Endothelial cell of umbilical vein (primary cell): ENCODE measurements at regions of chr10 and their contacts with region 1.

Region 1: DNA sequence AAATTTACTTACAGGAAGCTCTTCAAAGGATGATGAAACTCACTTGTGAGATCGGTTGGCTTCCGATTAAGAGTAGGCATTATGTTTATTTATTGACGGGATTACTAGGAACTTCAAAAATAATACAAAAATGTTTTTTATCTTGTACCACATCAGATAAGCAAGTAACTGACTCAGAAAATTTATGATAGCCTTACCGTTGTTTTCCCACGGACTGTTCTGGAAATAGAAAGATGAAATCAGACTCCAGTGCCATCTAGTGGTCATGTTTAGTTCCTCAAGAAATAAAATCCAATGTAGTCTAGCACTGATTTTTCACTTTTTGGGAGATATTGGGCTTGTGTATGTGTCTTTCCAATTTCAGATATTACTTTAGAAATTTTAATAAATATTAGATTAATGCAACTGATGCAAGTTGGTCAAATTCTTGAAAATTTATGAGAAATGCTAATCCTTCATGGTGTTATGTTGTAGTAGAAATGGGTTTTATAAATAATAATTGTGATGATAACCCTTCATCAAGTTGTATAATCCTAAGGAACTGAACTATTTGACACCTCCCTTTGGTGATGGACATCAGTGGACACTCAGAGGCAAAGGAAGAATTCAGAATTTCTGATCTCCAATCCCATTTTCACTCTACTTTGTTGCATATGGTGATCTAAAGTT is 168.8 kb downstream of the TMEM26 start:
- DNase-seq: peak; percentile 83
- H3K4me3 ChIP-seq: no peak overlapping the region
- H3K27ac ChIP-seq: no peak overlapping the region
- H3K4me1 ChIP-seq: peaks cover 12% of the 10 kb centered on the region
- H3K27me3 ChIP-seq: no peaks in the 10 kb centered on the region
- CTCF ChIP-seq: peak; percentile 39 to 48
- POLR2A ChIP-seq: no peak

Region 2: GRCh38 chr10:60444494-60445064 is 839.8 kb before region 1 on chr10:
- CTCF ChIA-PET with region 1: interaction called, 3 read pairs
- POLR2A ChIA-PET with region 1: no interaction called
- dilution Hi-C with region 1: no loop called
- intact Hi-C with region 1: loop called (anchors 5 kb)
- DNase-seq: peak; percentile 45
- H3K4me3 ChIP-seq: no peak overlapping the region
- H3K27ac ChIP-seq: no peak overlapping the region
- H3K4me1 ChIP-seq: peaks cover 7% of the 10 kb centered on the region
- H3K27me3 ChIP-seq: no peaks in the 10 kb centered on the region
- CTCF ChIP-seq: peak; percentile 14 to 18
- POLR2A ChIP-seq: no peak

Region 3: DNA sequence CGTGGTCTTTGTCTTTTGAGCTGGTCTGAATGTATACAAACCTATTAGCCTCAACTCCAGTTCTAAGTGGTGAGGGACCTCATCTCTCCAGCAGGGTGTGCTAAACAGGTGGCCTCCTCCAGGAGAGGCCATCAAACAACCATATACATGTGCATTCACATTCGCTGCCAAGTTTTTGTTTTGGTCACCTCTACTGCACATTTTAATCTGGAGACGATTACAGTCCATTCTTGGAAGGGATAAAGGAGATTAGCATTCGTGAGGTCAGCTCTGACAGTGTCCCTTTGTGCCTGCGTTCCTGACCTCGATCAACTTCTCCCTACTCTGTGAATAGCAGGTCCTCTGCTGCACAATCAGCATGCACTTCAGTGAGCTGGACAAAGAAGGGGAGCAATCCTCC is 401.2 kb before region 1 on chr10:
- CTCF ChIA-PET with region 1: interaction called, 4 read pairs
- POLR2A ChIA-PET with region 1: no interaction called
- dilution Hi-C with region 1: no loop called
- intact Hi-C with region 1: loop called (anchors 1 kb)
- DNase-seq: peak; percentile 61
- H3K4me3 ChIP-seq: no peak overlapping the region
- H3K27ac ChIP-seq: no peak overlapping the region
- H3K4me1 ChIP-seq: no peaks in the 10 kb centered on the region
- H3K27me3 ChIP-seq: no peaks in the 10 kb centered on the region
- CTCF ChIP-seq: peak; percentile 41 to 64
- POLR2A ChIP-seq: no peak

Region 4: GRCh38 chr10:61024856-61025600 is 259.3 kb before region 1 on chr10:
- CTCF ChIA-PET with region 1: interaction called, 4 read pairs
- POLR2A ChIA-PET with region 1: no interaction called
- dilution Hi-C with region 1: no loop called
- intact Hi-C with region 1: loop called (anchors 10 kb)
- DNase-seq: no peak
- H3K4me3 ChIP-seq: no peak overlapping the region
- H3K27ac ChIP-seq: no peak overlapping the region
- H3K4me1 ChIP-seq: no peaks in the 10 kb centered on the region
- H3K27me3 ChIP-seq: peaks cover 0 to 4% of the 10 kb centered on the region in 2 experiments
- CTCF ChIP-seq: peak; percentile 82
- POLR2A ChIP-seq: no peak

Region 5: GRCh38 chr10:61140765-61141392 is 143.5 kb before region 1 on chr10:
- CTCF ChIA-PET with region 1: interaction called, 14 read pairs
- POLR2A ChIA-PET with region 1: no interaction called
- dilution Hi-C with region 1: no loop called
- intact Hi-C with region 1: loop called (anchors 1 kb)
- DNase-seq: peak; percentile 88
- H3K4me3 ChIP-seq: no peak overlapping the region
- H3K27ac ChIP-seq: peak overlapping the region; percentile 12
- H3K4me1 ChIP-seq: peaks cover 21% of the 10 kb centered on the region
- H3K27me3 ChIP-seq: no peaks in the 10 kb centered on the region
- CTCF ChIP-seq: peak; percentile 51 to 55
- POLR2A ChIP-seq: no peak

Region 6: GRCh38 chr10:61271127-61271823 is 13.1 kb before region 1 on chr10:
- CTCF ChIA-PET with region 1: interaction called, 10 read pairs
- POLR2A ChIA-PET with region 1: no interaction called
- dilution Hi-C with region 1: no loop called
- intact Hi-C with region 1: no loop called
- DNase-seq: peak; percentile 15
- H3K4me3 ChIP-seq: no peak overlapping the region
- H3K27ac ChIP-seq: no peak overlapping the region
- H3K4me1 ChIP-seq: no peaks in the 10 kb centered on the region
- H3K27me3 ChIP-seq: no peaks in the 10 kb centered on the region
- CTCF ChIP-seq: no peak
- POLR2A ChIP-seq: no peak

Region 7: DNA sequence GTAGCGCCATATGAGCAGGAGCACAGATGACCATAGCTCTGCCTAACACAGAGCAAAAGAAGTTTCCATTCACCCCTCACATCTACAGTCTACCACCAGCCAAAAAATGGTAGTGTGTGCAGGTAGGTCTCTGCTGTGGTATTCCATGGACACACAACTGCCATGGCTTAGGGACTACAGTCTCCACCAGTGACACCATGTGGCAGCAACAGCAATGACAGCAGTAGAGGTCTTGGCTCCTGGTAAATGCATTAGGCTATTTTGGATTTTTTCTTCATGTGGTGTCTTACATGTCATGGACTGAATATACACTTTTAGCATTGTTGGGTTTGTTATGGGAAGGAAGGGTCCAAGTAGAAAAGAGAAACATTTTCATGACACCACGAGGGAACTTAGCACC is 308.2 kb after region 1 on chr10:
- CTCF ChIA-PET with region 1: no interaction called
- POLR2A ChIA-PET with region 1: no interaction called
- dilution Hi-C with region 1: no loop called
- intact Hi-C with region 1: loop called (anchors 5 kb)
- DNase-seq: peak; percentile 7
- H3K4me3 ChIP-seq: no peak overlapping the region
- H3K27ac ChIP-seq: no peak overlapping the region
- H3K4me1 ChIP-seq: peaks cover 17% of the 10 kb centered on the region
- H3K27me3 ChIP-seq: no peaks in the 10 kb centered on the region
- CTCF ChIP-seq: peak; percentile 23 to 40
- POLR2A ChIP-seq: no peak